CD8-positive, alpha-beta T cell (primary cell): ENCODE measurements at regions of chr17 and their contacts with region 1.

Region 1: DNA sequence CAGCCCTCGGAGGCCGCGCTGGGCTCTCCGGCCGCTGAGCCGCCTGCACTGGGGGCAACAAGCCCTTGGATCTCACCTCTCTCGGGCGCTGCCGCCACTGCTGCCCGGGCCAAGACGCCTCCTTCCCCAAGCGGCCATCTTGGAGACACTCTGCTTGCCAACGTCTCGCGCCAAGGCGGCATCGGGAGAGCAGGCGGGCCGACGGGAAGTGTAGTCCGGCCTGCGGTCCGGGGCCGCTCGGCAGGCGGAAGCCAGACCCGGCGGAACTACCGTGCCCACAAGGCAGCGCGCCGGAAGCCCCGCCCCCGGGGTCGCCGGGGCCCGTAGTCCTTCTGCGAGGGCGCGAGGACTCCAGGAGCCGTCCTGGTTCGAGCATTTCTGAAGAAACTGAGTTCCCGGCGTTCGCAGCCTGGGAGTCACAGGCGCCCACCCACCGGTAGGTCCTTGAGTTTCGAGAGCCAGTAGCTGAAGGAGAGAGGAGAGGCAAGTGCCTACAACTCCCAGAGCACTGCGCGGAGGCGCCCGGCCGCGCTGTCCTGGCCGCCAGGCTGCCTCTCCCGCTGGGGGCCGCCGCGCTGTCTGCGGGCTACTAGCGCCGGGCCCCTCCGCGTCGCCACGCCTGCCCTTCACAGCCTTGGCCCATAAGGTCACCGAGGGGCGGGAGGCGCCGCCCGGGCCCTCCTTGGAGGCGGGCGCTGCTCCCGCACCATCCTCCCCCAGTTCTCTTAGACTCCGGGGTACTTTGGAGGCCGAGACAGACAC is at the start of gene TMEM11:
- DNase-seq: peak; percentile 89 to 97 (median 94)
- ATAC-seq: peak; percentile 92
- H3K4me3 ChIP-seq: peak within 1 kb of the TSS; percentile 87 to 100
- H3K4me3 Mint-ChIP-seq: peak within 1 kb of the TSS; percentile 94
- H3K27ac ChIP-seq: peak within 1 kb of the TSS; percentile 84 to 95
- H3K27ac Mint-ChIP-seq: peak within 1 kb of the TSS; percentile 93
- H3K4me1 ChIP-seq: peaks cover 38% of the 10 kb centered on the region
- H3K4me1 Mint-ChIP-seq: peaks cover 52% of the 10 kb centered on the region
- H3K27me3 ChIP-seq: no peaks in the 10 kb centered on the region
- H3K27me3 Mint-ChIP-seq: no peaks in the 10 kb centered on the region
- CTCF ChIP-seq: peak; percentile 26
- total RNA-seq, gene TMEM11: 23.4 to 26.2 TPM

Region 2: DNA sequence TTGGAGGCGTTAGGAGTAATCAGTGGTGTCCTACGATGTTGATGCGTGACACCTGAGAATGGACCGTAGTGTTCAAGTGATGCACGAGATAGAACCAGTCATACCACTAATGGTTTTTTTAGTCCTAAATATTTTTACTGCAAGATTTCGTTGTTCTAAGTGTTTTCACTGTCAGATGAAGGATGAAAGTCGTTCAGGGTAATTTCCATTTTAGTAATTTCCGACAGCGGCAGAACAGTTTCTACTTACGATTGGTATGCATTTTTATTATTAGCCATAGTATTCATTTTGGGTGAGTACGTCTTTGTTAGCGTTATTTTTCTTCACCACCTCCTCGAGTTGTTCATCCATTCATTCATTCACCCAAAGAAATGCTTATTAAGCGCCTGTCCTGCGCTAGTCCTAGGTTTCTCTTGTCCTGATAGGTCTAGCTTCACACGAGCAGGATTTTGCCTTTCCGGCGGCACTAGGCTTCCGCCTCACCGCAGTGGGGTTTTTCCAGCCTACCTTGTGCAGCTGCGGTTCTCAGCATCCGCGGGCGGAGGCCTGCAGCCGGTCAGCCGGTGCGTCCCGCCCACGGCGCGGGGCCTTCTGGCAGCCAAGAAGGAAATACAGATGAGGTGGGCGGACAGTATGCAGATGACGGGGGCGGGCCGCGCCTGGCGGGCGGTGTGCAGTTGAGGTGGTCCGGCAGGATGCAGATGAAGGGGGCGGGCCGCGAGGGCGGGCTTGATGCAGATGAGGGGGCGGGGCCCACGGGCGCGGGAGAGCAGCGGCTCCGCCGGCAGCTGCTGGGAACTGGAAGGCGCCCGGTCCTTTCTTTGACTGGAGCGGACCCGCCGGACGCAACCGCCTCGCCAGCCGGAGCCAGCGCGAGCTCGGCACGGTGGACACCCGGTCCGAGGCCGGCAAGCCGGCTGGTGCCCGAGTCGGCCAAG is 1058.7 kb before region 1 on chr17:
- CTCF ChIA-PET with region 1: no interaction called
- POLR2A ChIA-PET with region 1: no interaction called
- intact Hi-C with region 1: loop called in 1 of 2 experiments (anchors 5 kb)
- DNase-seq: peak; percentile 87 to 98 (median 95)
- ATAC-seq: peak; percentile 98
- H3K4me3 ChIP-seq: peak overlapping the region; percentile 48 to 70
- H3K4me3 Mint-ChIP-seq: no peak overlapping the region
- H3K27ac ChIP-seq: peak overlapping the region; percentile 21 to 47
- H3K27ac Mint-ChIP-seq: no peak overlapping the region
- H3K4me1 ChIP-seq: peaks cover 16% of the 10 kb centered on the region
- H3K4me1 Mint-ChIP-seq: peaks cover 3% of the 10 kb centered on the region
- H3K27me3 ChIP-seq: no peaks in the 10 kb centered on the region
- H3K27me3 Mint-ChIP-seq: no peaks in the 10 kb centered on the region
- CTCF ChIP-seq: no peak

Region 3: DNA sequence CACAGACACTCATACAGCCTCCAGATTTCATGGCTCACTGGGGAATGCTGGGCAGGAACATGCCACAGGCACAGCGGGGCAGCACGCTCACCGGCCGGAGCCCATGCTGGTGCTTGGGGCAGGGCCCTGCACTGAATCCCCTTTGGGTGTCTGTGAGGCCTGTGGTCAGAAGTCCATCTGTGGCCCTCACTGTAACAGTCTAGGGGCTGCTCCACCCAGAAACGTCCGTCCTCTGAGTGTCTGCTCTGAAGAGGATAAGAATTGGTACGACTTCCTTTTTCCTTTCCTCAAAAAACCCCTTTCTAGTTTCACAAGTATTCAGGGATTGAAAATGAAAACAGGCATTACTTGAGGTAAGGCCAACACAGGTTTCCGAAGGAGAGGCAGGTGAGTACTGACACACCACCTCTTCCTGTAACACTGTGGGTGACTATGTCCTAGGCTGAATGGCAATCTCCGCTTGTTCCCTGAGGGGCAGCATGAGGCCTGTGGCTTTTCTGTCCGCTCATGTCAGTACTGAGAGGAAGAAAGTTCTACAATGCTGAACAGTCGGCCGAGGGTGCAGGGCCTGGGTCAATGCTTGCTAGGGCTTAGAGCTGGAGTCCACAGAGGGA is 42.8 kb before region 1 on chr17:
- CTCF ChIA-PET with region 1: no interaction called
- POLR2A ChIA-PET with region 1: no interaction called
- intact Hi-C with region 1: no loop called
- DNase-seq: peak in 1 of 9 experiments; percentile 38
- ATAC-seq: no peak
- H3K4me3 ChIP-seq: no peak overlapping the region
- H3K4me3 Mint-ChIP-seq: no peak overlapping the region
- H3K27ac ChIP-seq: no peak overlapping the region
- H3K27ac Mint-ChIP-seq: no peak overlapping the region
- H3K4me1 ChIP-seq: no peaks in the 10 kb centered on the region
- H3K4me1 Mint-ChIP-seq: peaks cover 12% of the 10 kb centered on the region
- H3K27me3 ChIP-seq: no peaks in the 10 kb centered on the region
- H3K27me3 Mint-ChIP-seq: no peaks in the 10 kb centered on the region
- CTCF ChIP-seq: no peak

Region 4: GRCh38 chr17:21252796-21253645 is 38.8 kb after region 1 on chr17 and contains the start of gene NATD1:
- CTCF ChIA-PET with region 1: interaction called, 3 read pairs
- POLR2A ChIA-PET with region 1: interaction called, 3 read pairs
- intact Hi-C with region 1: loop called (anchors 1 kb)
- DNase-seq: peak; percentile 54 to 92 (median 80)
- ATAC-seq: peak; percentile 79
- H3K4me3 ChIP-seq: peak within 1 kb of the TSS; percentile 55 to 73
- H3K4me3 Mint-ChIP-seq: peak within 1 kb of the TSS; percentile 86
- H3K27ac ChIP-seq: peak within 1 kb of the TSS; percentile 62 to 64
- H3K27ac Mint-ChIP-seq: peak within 1 kb of the TSS; percentile 92
- H3K4me1 ChIP-seq: peaks cover 17% of the 10 kb centered on the region
- H3K4me1 Mint-ChIP-seq: peaks cover 34% of the 10 kb centered on the region
- H3K27me3 ChIP-seq: no peaks in the 10 kb centered on the region
- H3K27me3 Mint-ChIP-seq: no peaks in the 10 kb centered on the region
- CTCF ChIP-seq: no peak
- total RNA-seq, gene NATD1: 6.3 to 6.6 TPM

Region 5: GRCh38 chr17:21284319-21285163 is 70.3 kb after region 1 on chr17 and contains the start of gene MAP2K3:
- CTCF ChIA-PET with region 1: interaction called, 12 read pairs
- POLR2A ChIA-PET with region 1: interaction called, 5 read pairs
- intact Hi-C with region 1: loop called (anchors 1 to 2 kb)
- DNase-seq: peak; percentile 84 to 97 (median 94)
- ATAC-seq: peak; percentile 65
- H3K4me3 ChIP-seq: peak within 1 kb of the TSS; percentile 78 to 81
- H3K4me3 Mint-ChIP-seq: peak within 1 kb of the TSS; percentile 94
- H3K27ac ChIP-seq: peak within 1 kb of the TSS; percentile 69 to 99
- H3K27ac Mint-ChIP-seq: peak within 1 kb of the TSS; percentile 96
- H3K4me1 ChIP-seq: peaks cover 45% of the 10 kb centered on the region
- H3K4me1 Mint-ChIP-seq: peaks cover 54% of the 10 kb centered on the region
- H3K27me3 ChIP-seq: no peaks in the 10 kb centered on the region
- H3K27me3 Mint-ChIP-seq: no peaks in the 10 kb centered on the region
- CTCF ChIP-seq: no peak
- total RNA-seq, gene MAP2K3: 59.9 to 63.8 TPM

Region 6: GRCh38 chr17:21304091-21304490 is 89.9 kb after region 1 on chr17:
- CTCF ChIA-PET with region 1: no interaction called
- POLR2A ChIA-PET with region 1: no interaction called
- intact Hi-C with region 1: no loop called
- DNase-seq: no peak
- ATAC-seq: no peak
- H3K4me3 ChIP-seq: no peak overlapping the region
- H3K4me3 Mint-ChIP-seq: no peak overlapping the region
- H3K27ac ChIP-seq: no peak overlapping the region
- H3K27ac Mint-ChIP-seq: no peak overlapping the region
- H3K4me1 ChIP-seq: no peaks in the 10 kb centered on the region
- H3K4me1 Mint-ChIP-seq: no peaks in the 10 kb centered on the region
- H3K27me3 ChIP-seq: no peaks in the 10 kb centered on the region
- H3K27me3 Mint-ChIP-seq: no peaks in the 10 kb centered on the region
- CTCF ChIP-seq: no peak

Region 7: GRCh38 chr17:21457051-21458026 is 243.1 kb after region 1 on chr17:
- CTCF ChIA-PET with region 1: interaction called, 4 read pairs
- POLR2A ChIA-PET with region 1: no interaction called
- intact Hi-C with region 1: loop called in 1 of 2 experiments (anchors 2 kb)
- DNase-seq: peak; percentile 81 to 97 (median 90)
- ATAC-seq: peak; percentile 91
- H3K4me3 ChIP-seq: no peak overlapping the region
- H3K4me3 Mint-ChIP-seq: peak overlapping the region; percentile 15
- H3K27ac ChIP-seq: no peak overlapping the region
- H3K27ac Mint-ChIP-seq: peak overlapping the region; percentile 86
- H3K4me1 ChIP-seq: peaks cover 20% of the 10 kb centered on the region
- H3K4me1 Mint-ChIP-seq: peaks cover 22% of the 10 kb centered on the region
- H3K27me3 ChIP-seq: no peaks in the 10 kb centered on the region
- H3K27me3 Mint-ChIP-seq: peaks cover 7% of the 10 kb centered on the region
- CTCF ChIP-seq: peak; percentile 86